CD8-positive, alpha-beta memory T cell (primary cell): ENCODE measurements at regions of chr12 and their contacts with region 1.

Region 1: GRCh38 chr12:12442548-12443071 is 85.7 kb downstream of the BORCS5 start:
- DNase-seq: no peak
- H3K4me3 ChIP-seq: no peak overlapping the region
- H3K4me3 Mint-ChIP-seq: peak overlapping the region in 4 of 7 donors; percentile 66 to 74 (median 72)
- H3K27ac ChIP-seq: peak overlapping the region; percentile 83
- H3K27ac Mint-ChIP-seq: peak overlapping the region; percentile 95 to 100 (median 98)
- H3K4me1 ChIP-seq: peaks cover 54% of the 10 kb centered on the region
- H3K4me1 Mint-ChIP-seq: peaks cover 84 to 94% (median 91%) of the 10 kb centered on the region in 3 donors
- H3K27me3 ChIP-seq: no peaks in the 10 kb centered on the region
- H3K27me3 Mint-ChIP-seq: no peaks in the 10 kb centered on the region

Region 2: GRCh38 chr12:11991604-11992003 is 451.0 kb before region 1 on chr12:
- CTCF ChIA-PET with region 1: no interaction called
- POLR2A ChIA-PET with region 1: no interaction called
- DNase-seq: no peak
- H3K4me3 ChIP-seq: no peak overlapping the region
- H3K4me3 Mint-ChIP-seq: no peak overlapping the region
- H3K27ac ChIP-seq: no peak overlapping the region
- H3K27ac Mint-ChIP-seq: no peak overlapping the region
- H3K4me1 ChIP-seq: no peaks in the 10 kb centered on the region
- H3K4me1 Mint-ChIP-seq: peaks cover 6 to 31% (median 9%) of the 10 kb centered on the region in 3 donors
- H3K27me3 ChIP-seq: no peaks in the 10 kb centered on the region
- H3K27me3 Mint-ChIP-seq: no peaks in the 10 kb centered on the region

Region 3: DNA sequence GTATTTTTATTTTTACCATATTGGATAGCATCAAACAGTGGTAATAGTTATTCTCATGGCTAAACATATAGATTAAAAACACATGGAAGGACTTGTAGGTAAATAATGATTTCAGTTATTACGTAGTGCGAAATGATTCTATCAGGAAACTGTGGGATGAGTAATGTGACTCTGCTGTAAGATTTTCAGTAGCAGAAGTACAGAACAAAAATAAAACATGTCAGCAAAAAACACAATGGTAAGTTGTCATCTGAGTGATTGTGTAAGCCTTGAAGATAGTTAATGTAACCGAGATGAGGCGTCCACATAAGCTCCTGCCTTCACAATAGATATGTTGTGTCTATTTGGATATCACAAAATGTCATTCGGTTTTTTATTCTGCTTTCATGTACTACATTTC is 14.0 kb after region 1 on chr12:
- CTCF ChIA-PET with region 1: interaction called, 6 read pairs
- POLR2A ChIA-PET with region 1: interaction called, 10 read pairs
- DNase-seq: no peak
- H3K4me3 ChIP-seq: no peak overlapping the region
- H3K4me3 Mint-ChIP-seq: peak overlapping the region in 6 of 7 donors; percentile 28 to 70 (median 52)
- H3K27ac ChIP-seq: peak overlapping the region; percentile 3
- H3K27ac Mint-ChIP-seq: peak overlapping the region; percentile 35 to 93 (median 88)
- H3K4me1 ChIP-seq: no peaks in the 10 kb centered on the region
- H3K4me1 Mint-ChIP-seq: peaks cover 17 to 50% (median 47%) of the 10 kb centered on the region in 3 donors
- H3K27me3 ChIP-seq: no peaks in the 10 kb centered on the region
- H3K27me3 Mint-ChIP-seq: no peaks in the 10 kb centered on the region

Region 4: GRCh38 chr12:12467264-12467663 is 24.7 kb after region 1 on chr12:
- CTCF ChIA-PET with region 1: interaction called, 3 read pairs
- POLR2A ChIA-PET with region 1: interaction called, 11 read pairs
- DNase-seq: peak in 2 of 5 donors; percentile 39 to 43
- H3K4me3 ChIP-seq: no peak overlapping the region
- H3K4me3 Mint-ChIP-seq: peak overlapping the region; percentile 26 to 78 (median 58)
- H3K27ac ChIP-seq: peak overlapping the region; percentile 52
- H3K27ac Mint-ChIP-seq: peak overlapping the region; percentile 82 to 100 (median 99)
- H3K4me1 ChIP-seq: peaks cover 44% of the 10 kb centered on the region
- H3K4me1 Mint-ChIP-seq: peaks cover 62 to 83% (median 70%) of the 10 kb centered on the region in 3 donors
- H3K27me3 ChIP-seq: no peaks in the 10 kb centered on the region
- H3K27me3 Mint-ChIP-seq: no peaks in the 10 kb centered on the region

Region 5: GRCh38 chr12:12474931-12475795 is 32.6 kb after region 1 on chr12:
- CTCF ChIA-PET with region 1: interaction called, 4 read pairs
- POLR2A ChIA-PET with region 1: interaction called, 13 read pairs
- DNase-seq: peak in 4 of 5 donors; percentile 30 to 74 (median 54)
- H3K4me3 ChIP-seq: peak overlapping the region; percentile 5
- H3K4me3 Mint-ChIP-seq: peak overlapping the region; percentile 23 to 82 (median 75)
- H3K27ac ChIP-seq: peak overlapping the region; percentile 71
- H3K27ac Mint-ChIP-seq: peak overlapping the region; percentile 88 to 99 (median 95)
- H3K4me1 ChIP-seq: peaks cover 23% of the 10 kb centered on the region
- H3K4me1 Mint-ChIP-seq: peaks cover 42 to 75% (median 61%) of the 10 kb centered on the region in 3 donors
- H3K27me3 ChIP-seq: no peaks in the 10 kb centered on the region
- H3K27me3 Mint-ChIP-seq: no peaks in the 10 kb centered on the region